RWPE1 (cell line): ENCODE measurements at regions of chr7 and their contacts with region 1.

Region 1: DNA sequence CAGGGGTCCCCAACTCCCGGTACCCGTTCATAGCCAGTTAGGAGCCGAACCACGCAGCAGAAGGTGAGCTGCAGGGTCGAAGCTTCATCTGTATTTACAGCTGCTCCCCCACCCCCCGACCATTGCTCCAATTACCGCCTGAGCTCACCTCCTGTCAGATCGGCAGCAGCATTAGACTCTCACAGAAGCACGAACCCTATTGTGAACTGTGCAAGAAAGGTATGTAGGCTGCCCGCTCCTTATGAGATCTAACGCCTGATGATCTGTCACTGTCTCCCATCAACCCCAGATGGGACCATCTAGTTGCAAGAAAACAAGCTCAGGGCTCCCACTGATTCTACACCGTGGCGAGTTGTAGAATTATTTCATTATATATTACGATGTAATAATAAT is 14.6 kb upstream of the AZGP1 start:
- DNase-seq: no peak
- H3K27ac ChIP-seq: no peak overlapping the region
- CTCF ChIP-seq: no peak

Region 2: GRCh38 chr7:99910976-99911375 is 79.5 kb before region 1 on chr7:
- CTCF ChIA-PET with region 1: interaction called, 12 read pairs
- POLR2A ChIA-PET with region 1: no interaction called
- DNase-seq: no peak
- H3K27ac ChIP-seq: no peak overlapping the region
- CTCF ChIP-seq: no peak

Region 3: DNA sequence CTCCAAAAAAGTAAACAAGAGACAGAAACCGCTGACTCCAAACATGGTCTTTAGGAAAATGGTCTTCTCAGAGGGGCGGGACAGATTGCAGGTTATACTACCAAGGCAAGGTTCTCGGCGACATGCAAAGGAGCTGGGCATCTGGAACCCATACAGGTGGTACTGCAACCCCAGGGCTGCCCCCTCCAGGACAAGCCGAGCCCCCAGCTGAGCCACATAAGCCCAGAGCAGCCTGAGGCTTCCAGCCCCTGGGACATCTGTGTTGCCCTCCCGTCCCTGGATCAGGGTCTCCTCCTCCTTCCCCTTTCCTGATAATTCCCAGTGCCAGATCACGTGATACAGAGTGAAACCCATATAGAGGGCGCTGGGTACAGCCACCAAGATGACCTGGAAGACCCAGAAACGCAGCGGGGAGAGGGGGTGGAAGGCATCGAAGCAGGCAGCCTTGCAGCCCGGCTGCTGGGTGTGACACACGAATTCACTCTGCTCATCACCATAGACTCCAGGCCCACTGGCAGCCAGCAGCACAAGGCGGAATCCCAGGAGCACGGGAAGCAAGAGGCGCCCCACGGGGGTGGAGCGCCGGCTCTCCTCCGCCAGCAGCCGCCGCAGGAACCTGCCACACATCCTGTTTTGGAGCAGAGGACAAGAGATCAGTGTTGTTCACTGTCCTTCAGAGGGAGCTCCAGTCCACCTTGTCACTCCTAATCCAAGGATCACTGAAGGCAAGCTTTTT is 61.3 kb before region 1 on chr7 and contains the start of gene GJC3:
- CTCF ChIA-PET with region 1: interaction called, 10 read pairs
- POLR2A ChIA-PET with region 1: no interaction called
- DNase-seq: peak; percentile 42
- H3K27ac ChIP-seq: no peak within 1 kb of the TSS
- CTCF ChIP-seq: peak; percentile 42

Region 4: GRCh38 chr7:100049441-100050311 is 59.2 kb after region 1 on chr7 and contains the start of gene ZSCAN21:
- CTCF ChIA-PET with region 1: interaction called, 12 read pairs
- POLR2A ChIA-PET with region 1: interaction called, 7 read pairs
- DNase-seq: peak; percentile 90
- H3K27ac ChIP-seq: peak within 1 kb of the TSS; percentile 91
- CTCF ChIP-seq: peak; percentile 23; the same call in 1 of the 2 replicates